ENCODE measurements at regions of chr2 and their contacts with region 1.

Region 1: GRCh38 chr2:42944779-42945415 is 152.5 kb upstream of the HAAO start:
- DNase-seq: no peak
- H3K4me3 ChIP-seq: no peak overlapping the region
- H3K27ac ChIP-seq: no peak overlapping the region
- H3K4me1 ChIP-seq: no peaks in the 10 kb centered on the region
- H3K27me3 ChIP-seq: no peaks in the 10 kb centered on the region
- CTCF ChIP-seq: no peak
- POLR2A ChIP-seq: no peak

Region 2: DNA sequence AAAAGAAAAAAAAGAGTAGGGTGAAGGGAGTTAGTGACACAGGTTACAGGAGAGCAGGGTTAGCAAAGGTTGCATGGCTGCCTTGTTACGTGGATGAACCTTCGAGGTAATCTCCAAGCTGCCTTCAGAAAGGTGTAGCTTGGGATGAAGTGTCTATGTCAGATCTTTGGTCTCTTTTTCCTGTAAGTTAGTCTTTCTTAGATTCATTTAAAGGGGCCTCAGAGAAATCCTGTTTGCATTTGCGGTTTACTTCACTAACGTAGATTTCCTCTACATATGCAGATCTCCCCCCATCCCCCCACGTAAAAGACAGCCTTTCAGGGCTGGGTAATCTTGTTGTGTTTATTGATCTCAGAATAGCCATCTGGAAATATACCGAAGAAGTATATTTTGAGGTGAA is 292.8 kb before region 1 on chr2:
- CTCF ChIA-PET with region 1: no interaction called
- POLR2A ChIA-PET with region 1: no interaction called
- dilution Hi-C with region 1: no loop called
- intact Hi-C with region 1: no loop called
- DNase-seq: no peak
- H3K4me3 ChIP-seq: no peak overlapping the region
- H3K27ac ChIP-seq: no peak overlapping the region
- H3K4me1 ChIP-seq: peaks cover 12% of the 10 kb centered on the region
- H3K27me3 ChIP-seq: no peaks in the 10 kb centered on the region
- CTCF ChIP-seq: no peak
- POLR2A ChIP-seq: no peak

Region 3: DNA sequence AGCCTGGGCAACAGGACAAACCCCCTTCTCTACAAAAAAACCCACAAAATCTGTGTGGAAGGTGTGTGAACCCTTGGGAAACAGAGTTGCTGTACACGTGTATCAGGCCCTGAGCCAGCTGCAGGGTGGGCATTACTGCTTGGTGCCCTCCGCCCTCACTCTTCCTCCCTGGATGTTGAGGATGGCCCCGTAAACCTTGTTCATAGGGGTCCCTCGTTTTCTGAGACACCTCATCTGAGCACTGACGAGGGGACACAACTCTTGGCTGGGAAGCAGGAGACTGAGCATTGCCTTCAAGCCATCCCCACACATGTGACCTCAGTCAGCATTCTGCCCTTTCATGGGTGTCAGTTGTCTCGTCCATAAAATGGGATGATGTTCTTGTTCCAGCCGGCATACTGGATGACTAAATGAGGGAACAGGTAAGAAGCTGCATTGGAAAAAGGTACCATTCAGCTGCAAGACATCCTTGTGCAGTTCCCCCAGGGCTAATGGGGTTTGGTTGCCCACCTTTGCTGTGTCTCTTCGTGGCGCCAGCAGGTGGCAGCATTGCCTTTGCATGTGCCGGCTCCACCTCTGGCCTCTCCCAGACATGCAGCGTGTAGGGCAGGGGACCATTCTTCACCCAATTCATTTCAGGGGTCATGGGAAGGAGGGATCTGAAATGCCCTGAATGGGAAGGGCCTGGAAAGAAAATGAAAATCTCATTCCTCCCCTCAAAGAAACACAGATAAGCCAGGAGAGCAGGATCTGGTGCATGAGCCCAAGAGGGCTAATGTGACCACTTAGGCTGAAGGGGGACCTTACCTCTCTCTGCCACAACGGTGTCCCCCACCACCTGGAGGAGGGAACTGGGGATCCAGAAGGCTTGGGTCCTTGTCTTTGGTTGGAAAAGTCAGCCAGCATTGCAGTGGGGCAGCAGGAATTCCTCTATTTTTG is 116.1 kb before region 1 on chr2:
- CTCF ChIA-PET with region 1: no interaction called
- POLR2A ChIA-PET with region 1: no interaction called
- dilution Hi-C with region 1: no loop called
- intact Hi-C with region 1: loop called (anchors 1 kb)
- DNase-seq: peak; percentile 66
- H3K4me3 ChIP-seq: no peak overlapping the region
- H3K27ac ChIP-seq: no peak overlapping the region
- H3K4me1 ChIP-seq: no peaks in the 10 kb centered on the region
- H3K27me3 ChIP-seq: no peaks in the 10 kb centered on the region
- CTCF ChIP-seq: peak; percentile 91 to 93
- POLR2A ChIP-seq: no peak

Region 4: GRCh38 chr2:42839809-42840501 is 104.9 kb before region 1 on chr2:
- CTCF ChIA-PET with region 1: no interaction called
- POLR2A ChIA-PET with region 1: no interaction called
- dilution Hi-C with region 1: no loop called
- intact Hi-C with region 1: no loop called
- DNase-seq: no peak
- H3K4me3 ChIP-seq: no peak overlapping the region
- H3K27ac ChIP-seq: no peak overlapping the region
- H3K4me1 ChIP-seq: peaks cover 11% of the 10 kb centered on the region
- H3K27me3 ChIP-seq: no peaks in the 10 kb centered on the region
- CTCF ChIP-seq: no peak
- POLR2A ChIP-seq: no peak

Region 5: DNA sequence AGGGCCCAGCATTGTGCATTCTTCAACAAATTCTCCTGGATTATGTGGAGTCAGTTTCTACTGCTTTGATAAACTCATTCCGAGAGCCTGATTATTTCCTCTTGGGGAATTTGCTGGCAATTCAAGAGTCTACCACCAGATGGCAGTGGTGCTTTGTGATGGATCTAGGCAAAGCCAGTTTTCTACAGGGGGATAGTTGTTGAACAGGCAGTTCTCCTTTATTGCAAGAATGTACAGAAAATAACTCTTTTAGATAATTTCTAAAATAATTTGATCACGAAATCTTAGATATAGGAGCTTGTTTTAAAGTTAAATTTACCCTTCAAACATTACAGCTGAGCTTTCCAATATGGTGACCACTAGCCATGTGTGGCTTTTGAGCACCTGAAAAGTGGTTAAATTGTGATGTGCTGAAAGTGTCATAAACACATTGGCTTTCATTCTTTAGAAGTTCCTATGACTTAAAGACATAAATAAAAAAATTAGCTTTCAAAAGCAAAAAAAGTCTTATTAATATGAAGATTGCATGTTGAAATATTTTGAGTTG is 85.8 kb before region 1 on chr2:
- CTCF ChIA-PET with region 1: interaction called, 17 read pairs
- POLR2A ChIA-PET with region 1: no interaction called
- dilution Hi-C with region 1: no loop called
- intact Hi-C with region 1: loop called (anchors 1 kb)
- DNase-seq: peak; percentile 90
- H3K4me3 ChIP-seq: no peak overlapping the region
- H3K27ac ChIP-seq: no peak overlapping the region
- H3K4me1 ChIP-seq: peaks cover 19% of the 10 kb centered on the region
- H3K27me3 ChIP-seq: no peaks in the 10 kb centered on the region
- CTCF ChIP-seq: peak; percentile 75 to 78
- POLR2A ChIP-seq: no peak

Region 6: DNA sequence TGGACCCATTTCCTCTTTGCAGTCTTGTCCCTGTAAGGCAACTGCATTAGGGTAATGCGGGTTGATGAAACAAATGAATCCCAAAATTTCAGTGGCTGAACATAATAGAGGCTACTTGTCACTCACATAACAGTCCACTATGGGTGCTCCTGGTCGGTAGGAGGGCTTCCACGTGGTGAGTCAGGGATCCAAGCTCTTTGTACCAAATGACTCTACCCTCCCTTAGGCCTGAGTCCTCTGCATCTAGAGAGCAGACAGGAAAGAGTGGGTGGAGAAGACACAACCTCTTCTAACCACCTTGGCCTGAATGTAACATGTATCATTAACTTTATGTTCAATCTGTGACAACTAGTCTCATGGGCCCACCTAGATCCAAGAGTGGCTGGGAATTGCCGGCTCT is 66.3 kb before region 1 on chr2:
- CTCF ChIA-PET with region 1: interaction called, 13 read pairs
- POLR2A ChIA-PET with region 1: no interaction called
- dilution Hi-C with region 1: no loop called
- intact Hi-C with region 1: no loop called
- DNase-seq: peak; percentile 16
- H3K4me3 ChIP-seq: no peak overlapping the region
- H3K27ac ChIP-seq: peak overlapping the region; percentile 72
- H3K4me1 ChIP-seq: peaks cover 51% of the 10 kb centered on the region
- H3K27me3 ChIP-seq: no peaks in the 10 kb centered on the region
- CTCF ChIP-seq: no peak
- POLR2A ChIP-seq: no peak

Region 7: GRCh38 chr2:42928692-42929545 is 16.0 kb before region 1 on chr2:
- CTCF ChIA-PET with region 1: interaction called, 7 read pairs
- POLR2A ChIA-PET with region 1: no interaction called
- dilution Hi-C with region 1: no loop called
- intact Hi-C with region 1: loop called (anchors 1 kb)
- DNase-seq: peak; percentile 62
- H3K4me3 ChIP-seq: no peak overlapping the region
- H3K27ac ChIP-seq: peak overlapping the region; percentile 49
- H3K4me1 ChIP-seq: peaks cover 51% of the 10 kb centered on the region
- H3K27me3 ChIP-seq: no peaks in the 10 kb centered on the region
- CTCF ChIP-seq: peak; percentile 31 to 49
- POLR2A ChIP-seq: no peak

Region 8: DNA sequence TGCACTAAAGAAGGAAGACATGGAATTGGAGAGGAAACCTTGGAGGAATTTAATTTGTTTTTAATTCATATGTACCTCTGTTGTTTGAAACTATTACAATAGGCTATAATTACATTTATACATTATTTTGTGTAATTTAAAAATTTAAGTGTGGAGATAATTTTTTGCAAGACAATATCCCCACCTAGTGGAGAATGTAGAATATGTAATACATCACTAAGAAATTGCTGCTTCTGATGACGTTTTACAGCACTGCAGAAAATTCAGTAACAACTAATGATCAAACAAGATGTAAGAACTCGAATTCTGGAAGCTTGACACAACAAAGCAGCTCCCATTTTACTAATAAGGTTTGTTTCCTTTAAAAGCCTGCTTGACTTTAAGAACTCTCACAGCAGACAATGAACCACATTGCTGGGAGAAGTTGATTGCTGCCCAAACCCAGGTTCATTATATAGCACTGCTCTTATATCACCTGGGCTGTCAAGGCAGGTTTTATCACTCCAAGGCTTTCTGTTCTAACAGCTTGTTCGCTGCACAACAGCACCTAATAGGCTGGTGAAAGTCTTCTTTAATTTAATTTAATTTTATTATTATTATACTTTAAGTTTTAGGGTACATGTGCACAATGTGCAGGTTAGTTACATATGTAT is 597.5 kb after region 1 on chr2:
- CTCF ChIA-PET with region 1: interaction called, 6 read pairs
- POLR2A ChIA-PET with region 1: no interaction called
- dilution Hi-C with region 1: no loop called
- intact Hi-C with region 1: loop called (anchors 2 kb)
- DNase-seq: peak; percentile 66
- H3K4me3 ChIP-seq: no peak overlapping the region
- H3K27ac ChIP-seq: no peak overlapping the region
- H3K4me1 ChIP-seq: no peaks in the 10 kb centered on the region
- H3K27me3 ChIP-seq: no peaks in the 10 kb centered on the region
- CTCF ChIP-seq: peak in 1 of 2 donors; percentile 17
- POLR2A ChIP-seq: no peak

Region 9: DNA sequence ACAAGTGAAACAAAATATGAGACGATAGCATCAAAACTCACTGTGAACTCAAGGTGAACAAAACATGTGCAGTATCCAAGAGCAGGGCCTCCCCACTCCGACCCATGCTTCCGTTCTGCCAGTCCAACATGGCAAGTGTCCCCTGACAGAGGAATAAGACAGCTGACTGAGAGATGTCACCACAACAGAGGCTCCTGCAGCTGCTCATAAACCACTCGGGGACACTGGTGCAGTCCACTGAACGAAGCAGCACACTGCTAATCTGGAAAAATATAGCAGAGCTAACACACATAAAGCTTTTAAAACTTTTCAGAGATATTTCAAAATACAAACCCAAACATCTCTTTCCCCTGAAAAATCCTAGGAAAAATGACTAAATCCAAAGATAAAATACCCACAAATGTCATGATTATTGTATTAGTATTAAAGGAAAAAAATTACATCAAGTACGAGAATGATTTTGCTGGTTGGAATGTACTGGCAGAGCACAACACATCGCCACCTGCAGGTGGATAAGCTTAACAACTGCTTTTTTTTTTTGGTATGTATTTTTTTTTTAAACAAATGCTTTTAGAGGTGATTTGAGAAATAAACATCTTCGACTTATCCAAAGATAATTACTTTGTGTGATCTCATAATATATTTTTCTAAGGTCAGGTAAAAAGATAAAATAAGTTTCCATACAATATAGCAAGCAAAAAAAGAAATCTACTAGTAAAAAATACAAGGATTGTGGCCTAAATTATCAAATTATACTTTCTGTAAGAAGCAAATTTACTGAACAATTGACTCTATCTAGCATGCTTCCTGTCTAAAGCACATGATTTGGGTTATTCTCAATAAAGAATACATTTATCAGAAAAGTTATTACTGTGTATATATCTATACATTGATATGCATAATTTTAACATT is 632.3 kb after region 1 on chr2:
- CTCF ChIA-PET with region 1: interaction called, 4 read pairs
- POLR2A ChIA-PET with region 1: no interaction called
- dilution Hi-C with region 1: no loop called
- intact Hi-C with region 1: loop called (anchors 5 kb)
- DNase-seq: peak; percentile 61
- H3K4me3 ChIP-seq: no peak overlapping the region
- H3K27ac ChIP-seq: no peak overlapping the region
- H3K4me1 ChIP-seq: no peaks in the 10 kb centered on the region
- H3K27me3 ChIP-seq: no peaks in the 10 kb centered on the region
- CTCF ChIP-seq: peak; percentile 60 to 66
- POLR2A ChIP-seq: no peak